Activated B cell treated with CpG ODN at 0.5 μM for 24 hours (primary cell): ENCODE measurements at regions of chr18 and their contacts with region 1.

Region 1: GRCh38 chr18:58768293-58768974 is 96.2 kb upstream of the ZNF532 start:
- DNase-seq: peak; percentile 58
- ATAC-seq: peak; percentile 83
- H3K4me3 Mint-ChIP-seq: peak overlapping the region; percentile 58
- H3K27ac Mint-ChIP-seq: no peak overlapping the region
- H3K4me1 Mint-ChIP-seq: peaks cover 7% of the 10 kb centered on the region
- H3K27me3 Mint-ChIP-seq: peaks cover 12% of the 10 kb centered on the region
- CTCF ChIP-seq: peak; percentile 18

Region 2: GRCh38 chr18:57797209-57797651 is 971.2 kb before region 1 on chr18:
- CTCF ChIA-PET with region 1: no interaction called
- POLR2A ChIA-PET with region 1: no interaction called
- intact Hi-C with region 1: no loop called
- DNase-seq: no peak
- ATAC-seq: no peak
- H3K4me3 Mint-ChIP-seq: no peak overlapping the region
- H3K27ac Mint-ChIP-seq: no peak overlapping the region
- H3K4me1 Mint-ChIP-seq: peaks cover 13% of the 10 kb centered on the region
- H3K27me3 Mint-ChIP-seq: peaks cover 22% of the 10 kb centered on the region
- CTCF ChIP-seq: no peak

Region 3: DNA sequence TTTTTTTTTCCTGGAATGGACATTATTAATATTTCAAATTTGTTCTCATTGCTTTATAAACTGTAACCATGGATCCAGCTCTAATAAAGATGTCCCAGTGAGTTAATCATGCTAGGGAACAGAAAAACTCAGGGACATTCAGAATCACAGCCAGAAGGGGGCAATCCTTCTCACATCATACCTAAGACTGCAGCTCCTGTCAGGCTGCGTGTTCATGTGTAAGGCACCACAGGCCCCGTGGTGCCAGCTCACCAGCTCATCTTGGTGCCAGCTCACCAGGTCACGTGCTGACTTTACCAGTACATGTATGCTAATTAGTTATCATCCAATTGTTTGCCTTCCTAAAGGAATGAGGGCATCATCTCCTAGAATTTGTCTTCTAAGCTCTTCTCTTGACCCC is 809.2 kb before region 1 on chr18:
- CTCF ChIA-PET with region 1: interaction called, 11 read pairs
- POLR2A ChIA-PET with region 1: no interaction called
- intact Hi-C with region 1: loop called (anchors 5 kb)
- DNase-seq: no peak
- ATAC-seq: peak; percentile 88
- H3K4me3 Mint-ChIP-seq: no peak overlapping the region
- H3K27ac Mint-ChIP-seq: no peak overlapping the region
- H3K4me1 Mint-ChIP-seq: no peaks in the 10 kb centered on the region
- H3K27me3 Mint-ChIP-seq: no peaks in the 10 kb centered on the region
- CTCF ChIP-seq: no peak

Region 4: DNA sequence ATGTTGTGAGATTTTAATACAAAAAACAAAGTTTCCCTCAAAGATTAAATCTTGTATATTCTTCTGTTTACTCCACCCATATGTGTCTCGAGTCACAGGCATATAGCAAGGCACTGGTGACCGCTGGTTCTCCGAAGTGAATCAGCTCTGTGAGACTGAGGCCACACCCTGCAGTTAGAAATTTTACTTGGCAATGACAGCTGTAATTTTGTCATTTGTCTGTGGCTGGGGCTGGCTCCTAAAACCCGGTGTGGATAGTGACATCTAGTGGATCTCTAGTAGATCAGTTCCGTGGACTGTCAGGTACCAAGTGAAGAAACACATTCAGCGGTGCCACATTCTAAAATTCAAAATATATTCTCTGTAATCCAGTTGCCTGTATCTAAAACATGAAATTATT is 446.4 kb before region 1 on chr18:
- CTCF ChIA-PET with region 1: no interaction called
- POLR2A ChIA-PET with region 1: no interaction called
- intact Hi-C with region 1: loop called (anchors 10 kb)
- DNase-seq: no peak
- ATAC-seq: peak; percentile 77
- H3K4me3 Mint-ChIP-seq: no peak overlapping the region
- H3K27ac Mint-ChIP-seq: no peak overlapping the region
- H3K4me1 Mint-ChIP-seq: peaks cover 11% of the 10 kb centered on the region
- H3K27me3 Mint-ChIP-seq: no peaks in the 10 kb centered on the region
- CTCF ChIP-seq: no peak

Region 5: DNA sequence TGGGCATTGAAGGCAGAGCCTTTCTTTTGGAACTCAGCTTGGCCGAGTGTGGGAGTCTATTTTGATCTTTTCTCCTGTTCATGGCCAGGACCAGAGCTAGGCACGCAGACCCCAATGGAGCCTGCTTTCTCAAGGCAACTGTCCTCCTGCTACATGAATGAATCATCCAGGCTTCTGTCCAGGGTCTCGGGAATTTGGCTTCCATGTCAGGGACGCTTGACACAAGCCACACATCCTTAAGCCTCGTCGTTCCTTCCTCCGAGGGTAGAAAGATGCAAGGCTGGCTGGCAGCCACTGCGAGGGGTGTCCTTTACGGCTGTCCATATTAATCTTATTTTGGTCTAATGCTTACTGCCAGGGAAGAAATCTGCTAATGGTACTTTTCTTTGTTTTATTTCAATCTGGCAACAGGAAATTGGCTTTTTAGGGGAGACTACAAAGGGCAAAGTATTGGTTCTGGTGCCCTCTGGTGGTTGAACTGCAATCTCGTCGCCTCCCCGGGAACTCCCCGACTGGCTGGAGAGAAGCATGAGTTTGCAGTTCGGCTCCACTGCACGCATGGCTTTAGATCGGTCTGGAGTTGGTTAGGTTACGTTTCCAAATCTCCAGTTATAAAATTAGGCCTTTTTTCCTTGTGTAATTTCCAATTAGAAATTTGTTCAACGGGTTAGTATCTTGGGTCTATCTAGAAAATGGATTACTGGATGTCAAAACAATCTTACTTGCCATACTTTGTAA is 274.7 kb before region 1 on chr18:
- CTCF ChIA-PET with region 1: interaction called, 36 read pairs
- POLR2A ChIA-PET with region 1: no interaction called
- intact Hi-C with region 1: loop called (anchors 1 kb)
- DNase-seq: peak; percentile 27
- ATAC-seq: peak; percentile 87
- H3K4me3 Mint-ChIP-seq: no peak overlapping the region
- H3K27ac Mint-ChIP-seq: no peak overlapping the region
- H3K4me1 Mint-ChIP-seq: peaks cover 7% of the 10 kb centered on the region
- H3K27me3 Mint-ChIP-seq: peaks cover 37% of the 10 kb centered on the region
- CTCF ChIP-seq: peak; percentile 55

Region 6: GRCh38 chr18:58529714-58530354 is 238.6 kb before region 1 on chr18:
- CTCF ChIA-PET with region 1: interaction called, 295 read pairs
- POLR2A ChIA-PET with region 1: interaction called, 12 read pairs
- intact Hi-C with region 1: loop called (anchors 1 kb)
- DNase-seq: peak; percentile 54
- ATAC-seq: peak; percentile 82
- H3K4me3 Mint-ChIP-seq: no peak overlapping the region
- H3K27ac Mint-ChIP-seq: no peak overlapping the region
- H3K4me1 Mint-ChIP-seq: peaks cover 44% of the 10 kb centered on the region
- H3K27me3 Mint-ChIP-seq: no peaks in the 10 kb centered on the region
- CTCF ChIP-seq: peak; percentile 83

Region 7: DNA sequence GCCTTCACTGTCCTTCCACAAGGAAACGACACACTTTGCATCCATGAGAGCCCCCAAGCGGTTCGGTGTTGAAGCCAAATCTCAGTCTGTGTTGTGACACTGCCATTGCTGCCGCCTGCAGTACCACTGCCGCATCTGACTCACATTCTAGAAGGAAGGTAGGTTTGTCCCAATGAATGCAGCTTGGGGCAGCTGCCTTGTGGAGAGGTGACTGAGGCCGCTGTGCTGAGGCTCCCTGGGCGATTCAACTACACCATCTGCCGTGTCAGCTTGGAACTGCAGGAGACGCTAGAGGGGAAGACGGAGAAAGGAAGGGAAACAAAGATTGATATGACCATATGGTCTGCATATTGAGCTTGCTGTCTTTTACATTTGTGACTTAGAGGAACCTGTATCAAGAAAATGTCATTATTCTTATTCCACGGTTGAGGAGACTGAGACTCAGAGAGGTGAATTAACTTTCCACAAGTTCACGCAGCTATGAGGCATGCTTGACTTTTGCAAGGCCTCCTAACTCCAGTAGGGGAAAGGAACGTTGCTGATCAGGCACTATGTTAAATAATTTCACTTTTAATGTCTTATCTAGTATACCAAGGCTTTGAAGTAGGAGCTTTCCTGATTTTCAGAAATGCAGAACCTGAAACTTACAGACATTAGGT is 634.1 kb after region 1 on chr18:
- CTCF ChIA-PET with region 1: interaction called, 17 read pairs
- POLR2A ChIA-PET with region 1: no interaction called
- intact Hi-C with region 1: loop called (anchors 2 kb)
- DNase-seq: peak; percentile 50
- ATAC-seq: peak; percentile 96
- H3K4me3 Mint-ChIP-seq: no peak overlapping the region
- H3K27ac Mint-ChIP-seq: no peak overlapping the region
- H3K4me1 Mint-ChIP-seq: peaks cover 3% of the 10 kb centered on the region
- H3K27me3 Mint-ChIP-seq: peaks cover 4% of the 10 kb centered on the region
- CTCF ChIP-seq: no peak